Right ventricle myocardium inferior (tissue), 1 donor: ENCODE measurements at regions of chr12 and their contacts with region 1.

Region 1: GRCh38 chr12:11834104-11834812 is 184.8 kb downstream of the ETV6 start:
- DNase-seq: no peak
- ATAC-seq: no peak

Region 2: GRCh38 chr12:10618338-10618987 is 1215.8 kb before region 1 on chr12:
- intact Hi-C with region 1: no loop called
- DNase-seq: no peak
- ATAC-seq: no peak

Region 3: GRCh38 chr12:11795913-11796459 is 38.3 kb before region 1 on chr12:
- intact Hi-C with region 1: loop called (anchors 5 kb)
- DNase-seq: no peak
- ATAC-seq: no peak

Region 4: GRCh38 chr12:11862798-11863197 is 28.5 kb after region 1 on chr12:
- intact Hi-C with region 1: loop called (anchors 2 kb)
- DNase-seq: no peak
- ATAC-seq: peak; percentile 70

Region 5: GRCh38 chr12:12046401-12046800 is 212.1 kb after region 1 on chr12:
- intact Hi-C with region 1: no loop called
- DNase-seq: no peak
- ATAC-seq: no peak